T-cell (primary cell): ENCODE measurements at regions of chr1 and their contacts with region 1.

Region 1: GRCh38 chr1:169149555-169150286 is 43.2 kb downstream of the ATP1B1 start:
- DNase-seq: no peak
- ATAC-seq: no peak
- H3K4me3 ChIP-seq: no peak overlapping the region
- H3K4me3 Mint-ChIP-seq: no peak overlapping the region
- H3K27ac ChIP-seq: no peak overlapping the region
- H3K27ac Mint-ChIP-seq: no peak overlapping the region
- H3K4me1 ChIP-seq: no peaks in the 10 kb centered on the region
- H3K4me1 Mint-ChIP-seq: no peaks in the 10 kb centered on the region
- H3K27me3 ChIP-seq: no peaks in the 10 kb centered on the region
- H3K27me3 Mint-ChIP-seq: no peaks in the 10 kb centered on the region

Region 2: GRCh38 chr1:170145770-170146676 is 996.3 kb after region 1 on chr1 and contains the start of gene NTMT2:
- CTCF ChIA-PET with region 1: no interaction called
- POLR2A ChIA-PET with region 1: interaction called in 1 of 2 experiments, 10 read pairs
- DNase-seq: no peak
- ATAC-seq: no peak
- H3K4me3 ChIP-seq: no peak within 1 kb of the TSS
- H3K4me3 Mint-ChIP-seq: peak within 1 kb of the TSS in 1 of 3 donors; percentile 16
- H3K27ac ChIP-seq: no peak within 1 kb of the TSS
- H3K27ac Mint-ChIP-seq: no peak within 1 kb of the TSS
- H3K4me1 ChIP-seq: peaks cover 0 to 2% of the 10 kb centered on the region in 2 experiments
- H3K4me1 Mint-ChIP-seq: peaks cover 8 to 15% (median 15%) of the 10 kb centered on the region in 3 donors
- H3K27me3 ChIP-seq: peaks cover 0 to 4% of the 10 kb centered on the region in 2 experiments
- H3K27me3 Mint-ChIP-seq: peaks cover 17% of the 10 kb centered on the region in 2 donors
- total RNA-seq, gene NTMT2: not detected